ENCODE measurements at regions of chr19 and their contacts with region 1.

Region 1: GRCh38 chr19:18588611-18589379 is at the start of gene REX1BD:
- DNase-seq: peak; percentile 78
- ATAC-seq: peak; percentile 84
- H3K4me3 ChIP-seq: peak within 1 kb of the TSS; percentile 59 to 85 (median 68)
- H3K27ac ChIP-seq: peak within 1 kb of the TSS; percentile 92
- H3K4me1 ChIP-seq: peaks cover 33% of the 10 kb centered on the region
- H3K27me3 ChIP-seq: no peaks in the 10 kb centered on the region; a peak in 1 of 5 replicates
- CTCF ChIP-seq: peak; percentile 97
- EP300 ChIP-seq: no peak
- POLR2A ChIP-seq: peak; percentile 75 to 98
- RAD21 ChIP-seq: peak; percentile 72
- total RNA-seq, gene REX1BD: 20.7 and 25.4 TPM in 2 replicates

Region 2: GRCh38 chr19:18469069-18469846 is 119.5 kb before region 1 on chr19:
- CTCF ChIA-PET with region 1: interaction called, 3 read pairs
- POLR2A ChIA-PET with region 1: interaction called, 16 read pairs
- in situ Hi-C with region 1: no loop called
- intact Hi-C with region 1: loop called (anchors 2 kb)
- DNase-seq: peak; percentile 85
- ATAC-seq: peak; percentile 87
- H3K4me3 ChIP-seq: peak overlapping the region; percentile 36 to 65 (median 38); a peak in 5 of 6 replicates
- H3K27ac ChIP-seq: peak overlapping the region; percentile 45
- H3K4me1 ChIP-seq: peaks cover 74% of the 10 kb centered on the region
- H3K27me3 ChIP-seq: no peaks in the 10 kb centered on the region
- CTCF ChIP-seq: peak; percentile 90
- EP300 ChIP-seq: no peak
- POLR2A ChIP-seq: no peak
- RAD21 ChIP-seq: peak; percentile 56

Region 3: DNA sequence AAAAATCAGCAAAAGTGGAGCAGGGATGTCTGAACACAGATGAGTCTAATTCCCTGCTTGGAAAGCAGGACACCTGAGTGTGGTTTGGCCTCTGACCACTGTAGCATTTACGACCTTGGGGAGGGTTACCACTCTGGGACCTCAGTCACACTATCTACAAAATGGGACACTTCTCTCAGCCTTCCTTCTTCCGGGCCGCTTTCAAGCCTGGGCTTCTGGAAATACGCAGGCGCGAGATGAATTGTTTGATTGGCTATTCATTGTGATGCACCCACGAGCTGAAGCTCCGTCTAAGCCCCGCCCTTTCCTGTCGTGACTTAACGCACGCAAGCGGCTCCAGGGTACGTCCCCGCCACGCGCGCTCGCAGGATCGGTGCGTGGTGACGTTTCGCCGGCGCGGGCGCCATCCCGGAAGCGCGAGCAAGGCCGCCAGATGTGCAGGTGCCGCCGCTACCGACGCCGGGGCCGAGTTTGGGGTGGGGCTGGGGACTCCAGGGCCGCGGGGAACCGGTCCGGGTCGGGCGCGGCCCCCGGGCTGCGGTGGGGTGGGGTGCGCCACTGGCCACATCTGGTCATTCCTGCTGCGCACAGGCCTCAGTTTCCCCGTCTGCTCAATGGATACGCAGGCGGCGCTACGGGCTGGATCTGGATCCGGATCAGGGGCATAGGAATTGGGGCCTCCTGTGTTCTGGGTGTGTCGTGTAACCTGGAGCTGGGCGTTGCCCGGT is 31.2 kb before region 1 on chr19 and contains the start of gene KXD1:
- CTCF ChIA-PET with region 1: no interaction called
- POLR2A ChIA-PET with region 1: interaction called, 22 read pairs
- in situ Hi-C with region 1: no loop called
- intact Hi-C with region 1: no loop called
- DNase-seq: peak; percentile 95
- ATAC-seq: peak; percentile 95
- H3K4me3 ChIP-seq: peak within 1 kb of the TSS; percentile 69 to 90 (median 86)
- H3K27ac ChIP-seq: peak within 1 kb of the TSS; percentile 50
- H3K4me1 ChIP-seq: peaks cover 44% of the 10 kb centered on the region
- H3K27me3 ChIP-seq: no peaks in the 10 kb centered on the region; a peak in 1 of 5 replicates
- CTCF ChIP-seq: 0 out of 2 replicates have a peak, but pooled peaks have one; percentile 6
- EP300 ChIP-seq: 0 out of 4 replicates have a peak, but pooled peaks of 1 of the 2 experiments have one; percentile 31
- POLR2A ChIP-seq: peak in 1 of 2 experiments; percentile 62; a peak in 2 of 4 replicates
- RAD21 ChIP-seq: no peak
- total RNA-seq, gene KXD1: 44.6 and 53.1 TPM in 2 replicates

Region 4: DNA sequence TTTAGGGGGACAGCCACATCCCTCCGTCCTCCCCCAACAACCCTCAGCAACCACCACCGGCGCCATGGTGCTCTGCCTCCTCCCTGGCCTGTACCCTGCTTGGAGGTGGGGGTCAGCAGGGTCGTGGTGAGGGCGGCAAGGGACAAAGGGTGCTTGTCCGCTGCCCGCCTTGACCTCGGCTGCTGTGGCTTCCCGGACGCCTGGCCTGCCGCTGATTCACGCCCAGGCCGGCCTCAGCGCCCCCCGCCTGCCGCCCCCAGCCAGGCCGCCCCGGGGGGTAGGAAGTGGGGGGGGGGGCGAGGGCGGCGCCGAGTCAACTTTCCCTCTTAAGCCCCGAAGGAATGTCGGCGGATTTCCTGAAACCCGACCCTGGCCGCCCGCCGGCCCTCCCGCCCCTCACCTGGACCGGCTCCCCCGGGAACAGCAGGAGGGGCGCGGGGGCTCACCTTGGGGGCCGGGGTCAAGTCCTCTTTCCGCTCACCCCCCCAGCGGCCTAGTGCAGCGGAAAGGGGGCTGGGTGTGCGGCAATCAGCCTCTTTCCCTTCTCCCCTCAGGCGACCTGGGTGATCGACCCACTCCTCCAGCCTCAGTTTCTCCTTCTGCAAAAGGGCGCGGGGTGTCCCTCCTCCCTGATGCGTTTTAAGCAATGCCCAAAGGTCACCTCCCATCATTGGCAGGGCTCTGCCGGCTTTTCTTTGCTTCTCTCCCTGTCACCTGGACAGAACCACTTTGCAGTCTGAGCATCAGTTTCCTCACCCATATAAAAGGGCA is 21.9 kb after region 1 on chr19:
- CTCF ChIA-PET with region 1: no interaction called
- POLR2A ChIA-PET with region 1: interaction called, 14 read pairs
- in situ Hi-C with region 1: no loop called
- intact Hi-C with region 1: no loop called
- DNase-seq: peak; percentile 85
- ATAC-seq: peak; percentile 56
- H3K4me3 ChIP-seq: peak overlapping the region; percentile 48 to 75 (median 68)
- H3K27ac ChIP-seq: peak overlapping the region; percentile 84
- H3K4me1 ChIP-seq: peaks cover 53% of the 10 kb centered on the region
- H3K27me3 ChIP-seq: peaks cover 0 to 7% of the 10 kb centered on the region in 2 experiments; a peak in 2 of 5 replicates
- CTCF ChIP-seq: no peak; the same call in 1 of the 2 replicates
- EP300 ChIP-seq: peak in 1 of 2 experiments; percentile 70; a peak in 1 of 4 replicates
- POLR2A ChIP-seq: no peak; a peak in 2 of 4 replicates
- RAD21 ChIP-seq: no peak

Region 5: GRCh38 chr19:18649371-18650020 is 60.7 kb after region 1 on chr19:
- CTCF ChIA-PET with region 1: no interaction called
- POLR2A ChIA-PET with region 1: no interaction called
- in situ Hi-C with region 1: no loop called
- intact Hi-C with region 1: no loop called
- DNase-seq: no peak
- ATAC-seq: no peak
- H3K4me3 ChIP-seq: no peak overlapping the region
- H3K27ac ChIP-seq: no peak overlapping the region
- H3K4me1 ChIP-seq: peaks cover 4% of the 10 kb centered on the region; the same call in 1 of the 2 replicates
- H3K27me3 ChIP-seq: no peaks in the 10 kb centered on the region
- CTCF ChIP-seq: no peak
- EP300 ChIP-seq: no peak
- POLR2A ChIP-seq: no peak
- RAD21 ChIP-seq: no peak

Region 6: DNA sequence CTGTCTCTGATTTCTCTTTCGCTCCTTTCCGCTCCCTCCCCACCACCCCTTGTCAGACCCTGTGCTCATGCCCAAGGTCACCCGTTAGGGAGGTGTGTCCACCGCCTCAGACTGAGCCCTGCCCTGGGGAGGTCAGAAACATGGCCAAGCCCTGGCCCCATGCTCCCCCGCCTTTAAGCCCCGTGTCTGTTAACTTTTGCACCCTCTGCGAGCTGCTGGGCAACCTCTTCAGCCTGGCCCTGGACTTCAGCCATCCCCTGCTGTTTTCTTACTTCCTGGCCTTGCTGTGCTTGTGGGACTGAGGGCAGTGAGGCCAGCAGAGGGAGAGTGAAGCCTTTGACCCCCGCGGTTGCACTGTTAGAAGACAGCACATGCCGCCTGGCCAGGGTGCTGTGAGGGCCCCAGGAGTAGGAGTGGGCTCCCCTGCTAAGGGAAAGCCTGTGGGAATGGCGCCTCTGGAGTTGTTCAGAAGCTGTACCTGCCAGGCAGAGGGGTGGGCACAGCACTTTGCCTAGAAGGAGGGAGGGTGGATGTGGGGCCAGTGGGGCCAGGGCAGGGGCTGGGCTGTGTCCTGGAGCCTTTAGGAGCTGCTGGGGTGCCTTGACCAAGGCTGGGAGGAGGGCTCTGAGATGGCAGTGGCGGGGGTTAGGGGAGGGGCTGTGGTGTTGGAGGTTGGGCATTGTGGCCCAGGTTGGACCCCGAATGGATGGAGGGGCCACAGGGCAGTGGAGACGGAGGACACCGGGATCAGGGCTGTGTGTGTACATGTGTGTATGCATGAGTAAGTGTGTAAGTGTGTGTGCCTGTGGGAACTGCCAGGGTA is 250.9 kb after region 1 on chr19:
- CTCF ChIA-PET with region 1: no interaction called
- POLR2A ChIA-PET with region 1: interaction called, 12 read pairs
- in situ Hi-C with region 1: no loop called
- intact Hi-C with region 1: no loop called
- DNase-seq: peak; percentile 87
- ATAC-seq: peak; percentile 91
- H3K4me3 ChIP-seq: peak overlapping the region; percentile 24 to 72 (median 40); a peak in 5 of 6 replicates
- H3K27ac ChIP-seq: peak overlapping the region; percentile 89
- H3K4me1 ChIP-seq: peaks cover 95% of the 10 kb centered on the region
- H3K27me3 ChIP-seq: no peaks in the 10 kb centered on the region
- CTCF ChIP-seq: peak; percentile 75
- EP300 ChIP-seq: peak in 1 of 2 experiments; percentile 67; a peak in 2 of 4 replicates
- POLR2A ChIP-seq: 0 out of 4 replicates have a peak, but pooled peaks of 1 of the 2 experiments have one; percentile 12
- RAD21 ChIP-seq: peak; percentile 37

Measured in HepG2 (cell line).